ENCODE measurements at regions of chr1 and their contacts with region 1.

Region 1: GRCh38 chr1:205354259-205354904 is 2.3 kb downstream of the KLHDC8A start:
- DNase-seq: peak; percentile 9
- ATAC-seq: peak; percentile 91
- H3K4me3 ChIP-seq: no peak overlapping the region
- H3K27ac ChIP-seq: no peak overlapping the region
- H3K4me1 ChIP-seq: no peaks in the 10 kb centered on the region
- H3K27me3 ChIP-seq: peaks cover 0 to 4% of the 10 kb centered on the region in 2 experiments; a peak in 3 of 4 replicates
- CTCF ChIP-seq: peak; percentile 74 to 83 (median 83)
- EP300 ChIP-seq: no peak
- POLR2A ChIP-seq: no peak
- RAD21 ChIP-seq: peak; percentile 69

Region 2: DNA sequence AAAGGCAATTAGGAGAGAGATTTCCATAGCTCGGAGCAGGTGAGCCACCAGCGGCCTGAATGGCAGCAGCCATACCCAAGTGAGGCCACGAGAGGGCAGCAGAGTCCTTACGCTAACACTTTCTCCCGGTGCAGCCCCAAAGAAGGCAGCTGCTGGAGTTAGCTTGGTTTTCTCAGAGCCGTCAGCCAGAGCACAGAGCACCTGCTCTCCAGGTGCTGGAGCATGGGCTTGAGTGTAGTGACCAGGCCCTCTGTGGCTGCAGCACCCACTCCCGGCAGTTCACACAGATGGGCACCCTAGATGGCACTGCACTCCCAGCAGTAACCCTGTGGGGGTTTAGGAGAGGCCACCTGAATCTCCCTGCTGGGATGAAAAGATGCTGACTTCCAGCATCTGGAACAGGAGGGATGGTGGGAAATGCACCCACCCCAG is 80.8 kb before region 1 on chr1:
- CTCF ChIA-PET with region 1: interaction called, 22 read pairs
- POLR2A ChIA-PET with region 1: no interaction called
- RAD21 ChIA-PET with region 1: interaction called, 29 read pairs
- SMC1A ChIA-PET with region 1: interaction called, 27 read pairs
- in situ Hi-C with region 1: no loop called
- intact Hi-C with region 1: no loop called
- DNase-seq: peak; percentile 32
- ATAC-seq: peak; percentile 90
- H3K4me3 ChIP-seq: no peak overlapping the region
- H3K27ac ChIP-seq: no peak overlapping the region
- H3K4me1 ChIP-seq: peaks cover 3% of the 10 kb centered on the region; the same call in 1 of the 2 replicates
- H3K27me3 ChIP-seq: peaks cover 0 to 2% of the 10 kb centered on the region in 2 experiments; a peak in 1 of 4 replicates
- CTCF ChIP-seq: peak; percentile 92 to 98 (median 98)
- EP300 ChIP-seq: peak in 1 of 2 experiments; percentile 38; a peak in 1 of 4 replicates
- POLR2A ChIP-seq: no peak
- RAD21 ChIP-seq: peak; percentile 96

Region 3: DNA sequence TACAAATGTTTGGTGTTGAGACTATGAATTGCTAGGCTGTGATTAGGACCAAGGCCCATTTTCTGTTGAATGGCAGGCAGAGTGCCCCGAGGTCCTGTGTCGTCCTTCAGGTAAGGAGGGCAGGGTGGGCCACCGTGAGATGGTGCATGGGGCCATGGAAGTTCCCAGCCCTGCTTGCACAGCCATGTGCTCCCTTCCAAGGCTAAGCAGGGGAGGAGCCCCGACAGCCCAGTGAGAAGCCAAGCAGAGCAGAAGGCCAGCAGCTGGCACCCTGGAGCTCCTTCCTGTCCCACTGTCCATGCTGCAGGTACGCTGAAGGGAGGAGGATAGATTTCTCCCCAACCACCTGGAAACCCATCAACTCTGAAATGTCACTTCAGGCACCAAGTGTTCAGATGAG is 24.7 kb before region 1 on chr1:
- CTCF ChIA-PET with region 1: interaction called, 36 read pairs
- POLR2A ChIA-PET with region 1: no interaction called
- RAD21 ChIA-PET with region 1: interaction called, 12 read pairs
- SMC1A ChIA-PET with region 1: interaction called, 21 read pairs
- in situ Hi-C with region 1: no loop called
- intact Hi-C with region 1: no loop called
- DNase-seq: no peak
- ATAC-seq: no peak
- H3K4me3 ChIP-seq: no peak overlapping the region
- H3K27ac ChIP-seq: no peak overlapping the region
- H3K4me1 ChIP-seq: peaks cover 5% of the 10 kb centered on the region
- H3K27me3 ChIP-seq: peaks cover 2 to 6% of the 10 kb centered on the region in 2 experiments; a peak in 3 of 4 replicates
- CTCF ChIP-seq: no peak
- EP300 ChIP-seq: no peak
- POLR2A ChIP-seq: no peak
- RAD21 ChIP-seq: no peak

Region 4: DNA sequence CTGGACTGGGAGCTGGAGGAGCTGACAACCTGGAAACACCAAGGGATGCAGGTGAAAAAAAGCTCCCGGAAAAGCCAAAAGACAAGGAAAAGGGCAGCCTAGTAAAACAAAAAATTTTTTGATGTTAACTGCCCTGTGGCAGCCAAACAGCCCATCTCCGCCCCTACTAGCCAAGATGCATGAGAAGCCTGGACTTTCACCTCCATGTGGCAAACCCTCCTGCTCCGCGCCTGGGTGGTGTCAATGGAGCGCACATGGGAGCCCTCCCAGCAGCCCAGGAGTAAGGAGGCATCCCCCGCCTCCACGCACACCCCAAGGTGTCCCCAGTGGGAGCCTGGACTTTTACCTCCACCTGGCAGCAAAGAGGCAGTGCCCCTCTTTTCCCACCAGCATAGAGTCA is 37.0 kb after region 1 on chr1:
- CTCF ChIA-PET with region 1: interaction called, 22 read pairs
- POLR2A ChIA-PET with region 1: no interaction called
- RAD21 ChIA-PET with region 1: no interaction called
- SMC1A ChIA-PET with region 1: interaction called, 10 read pairs
- in situ Hi-C with region 1: no loop called
- intact Hi-C with region 1: no loop called
- DNase-seq: no peak
- ATAC-seq: no peak
- H3K4me3 ChIP-seq: no peak overlapping the region
- H3K27ac ChIP-seq: no peak overlapping the region
- H3K4me1 ChIP-seq: no peaks in the 10 kb centered on the region
- H3K27me3 ChIP-seq: no peaks in the 10 kb centered on the region
- CTCF ChIP-seq: no peak
- EP300 ChIP-seq: no peak
- POLR2A ChIP-seq: no peak
- RAD21 ChIP-seq: no peak

Region 5: DNA sequence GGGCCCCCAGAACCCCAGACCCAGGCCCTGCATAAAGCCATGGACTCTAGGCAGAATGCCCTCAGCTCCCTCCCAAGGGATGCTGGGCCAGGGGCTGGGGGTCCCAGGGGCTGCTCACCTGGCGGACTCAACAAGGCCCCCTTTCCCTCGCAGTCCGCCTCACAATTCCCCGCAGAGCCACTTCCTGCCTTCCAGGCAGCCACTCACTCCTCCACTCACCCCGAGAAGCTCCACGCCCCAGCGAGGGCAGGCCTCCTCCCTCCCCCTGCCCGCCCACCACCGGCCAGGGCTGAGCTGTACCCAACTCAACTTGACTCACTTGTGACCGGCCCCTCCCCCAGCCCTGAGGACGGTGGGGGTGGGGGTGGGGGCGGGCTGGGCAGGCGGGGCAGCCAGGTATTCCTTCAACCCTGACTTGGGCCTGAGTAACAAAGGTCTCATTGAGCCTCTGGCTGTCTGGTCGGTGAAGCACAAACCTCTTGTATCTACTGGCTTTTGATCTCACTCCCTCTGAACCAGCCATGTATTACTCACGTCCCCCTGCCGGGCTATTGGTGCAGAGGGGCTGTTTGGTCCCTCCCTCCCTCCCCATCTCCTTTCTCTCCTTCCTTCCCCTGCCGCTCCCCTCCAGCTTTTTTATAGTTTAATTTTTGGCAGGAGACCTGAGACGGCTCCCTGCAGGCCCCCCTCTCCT is 95.5 kb after region 1 on chr1:
- CTCF ChIA-PET with region 1: interaction called, 11 read pairs
- POLR2A ChIA-PET with region 1: no interaction called
- RAD21 ChIA-PET with region 1: no interaction called
- SMC1A ChIA-PET with region 1: no interaction called
- in situ Hi-C with region 1: no loop called
- intact Hi-C with region 1: no loop called
- DNase-seq: no peak
- ATAC-seq: peak; percentile 89
- H3K4me3 ChIP-seq: no peak overlapping the region
- H3K27ac ChIP-seq: no peak overlapping the region
- H3K4me1 ChIP-seq: peaks cover 5% of the 10 kb centered on the region; the same call in 1 of the 2 replicates
- H3K27me3 ChIP-seq: peaks cover 3 to 5% of the 10 kb centered on the region in 2 experiments; a peak in 3 of 4 replicates
- CTCF ChIP-seq: no peak
- EP300 ChIP-seq: no peak
- POLR2A ChIP-seq: no peak
- RAD21 ChIP-seq: no peak

Region 6: DNA sequence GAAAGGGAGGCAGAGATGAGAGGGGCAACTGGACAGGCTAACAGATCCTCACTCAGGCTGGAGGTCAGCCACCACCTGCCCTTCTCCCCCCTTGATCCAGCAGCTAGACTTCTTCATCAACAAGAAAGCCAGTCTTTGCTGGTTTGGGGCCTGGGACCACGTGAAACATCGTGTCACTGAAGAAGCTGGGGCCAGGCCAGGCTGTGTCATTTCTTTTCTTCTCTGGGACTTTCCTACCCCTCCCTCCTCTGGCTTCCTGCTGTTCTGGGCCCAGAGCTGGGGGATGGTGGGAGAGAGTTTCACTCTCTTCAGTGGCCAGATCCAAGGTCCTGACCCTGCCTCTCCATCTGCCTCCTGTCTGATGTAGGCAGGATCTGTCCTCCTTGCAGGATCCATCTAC is 607.0 kb after region 1 on chr1:
- CTCF ChIA-PET with region 1: no interaction called
- POLR2A ChIA-PET with region 1: no interaction called
- RAD21 ChIA-PET with region 1: no interaction called
- SMC1A ChIA-PET with region 1: no interaction called
- in situ Hi-C with region 1: no loop called
- intact Hi-C with region 1: no loop called
- DNase-seq: no peak
- ATAC-seq: peak; percentile 87
- H3K4me3 ChIP-seq: no peak overlapping the region
- H3K27ac ChIP-seq: no peak overlapping the region
- H3K4me1 ChIP-seq: peaks cover 9% of the 10 kb centered on the region; the same call in 1 of the 2 replicates
- H3K27me3 ChIP-seq: peaks cover 0 to 2% of the 10 kb centered on the region in 2 experiments; a peak in 3 of 4 replicates
- CTCF ChIP-seq: no peak
- EP300 ChIP-seq: no peak
- POLR2A ChIP-seq: no peak
- RAD21 ChIP-seq: no peak